ENCODE measurements at regions of chrX and their contacts with region 1.

Region 1: DNA sequence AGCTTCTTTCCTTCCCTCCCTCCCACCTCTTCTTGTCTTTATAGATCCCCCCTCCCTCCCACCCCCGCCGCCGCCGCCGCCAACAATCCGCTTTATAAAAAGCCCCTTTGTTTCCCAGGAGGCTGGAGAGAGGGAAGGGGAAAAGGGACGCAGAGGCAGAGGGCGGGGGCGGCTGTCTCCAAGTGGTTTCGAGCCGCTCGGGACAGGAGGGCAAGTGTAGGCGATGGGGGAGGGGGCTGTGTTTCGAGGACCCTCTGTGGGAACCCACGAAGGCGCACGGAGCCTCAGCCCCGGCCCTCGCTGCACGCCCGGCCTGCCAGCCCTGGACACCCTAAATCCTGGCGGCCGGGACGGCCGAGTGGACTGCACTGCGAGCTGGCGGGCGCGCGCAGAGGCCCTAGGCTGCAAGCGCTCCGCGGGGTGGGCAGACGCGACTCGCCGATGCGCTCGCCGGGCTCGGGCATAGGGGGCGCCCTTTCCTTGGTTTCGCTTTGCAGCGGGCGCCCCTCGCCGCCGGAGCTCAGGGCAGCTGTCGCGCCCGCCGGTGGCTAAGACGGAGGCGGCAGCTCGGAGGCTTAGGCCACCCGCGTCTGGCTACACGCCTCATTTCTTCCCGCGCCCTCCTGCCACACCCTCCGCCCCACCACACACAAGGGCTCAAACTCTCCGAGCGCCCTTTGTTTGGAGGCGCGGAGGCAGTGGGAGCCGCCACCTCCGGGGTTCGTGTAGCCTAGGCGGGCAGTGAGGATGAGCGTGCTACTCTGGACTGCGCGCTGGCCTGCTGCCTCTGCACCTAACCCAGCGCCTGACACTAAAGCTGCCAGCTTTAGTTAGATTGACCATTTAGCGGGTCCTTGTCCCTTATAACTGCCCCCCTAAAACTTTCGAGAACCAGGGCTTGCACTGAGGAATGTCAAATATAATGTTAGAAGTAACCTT is 2.2 kb downstream of the MAMLD1 start:
- DNase-seq: peak; percentile 23
- ATAC-seq: peak; percentile 10
- H3K4me3 Mint-ChIP-seq: peak overlapping the region; percentile 84
- H3K27ac Mint-ChIP-seq: no peak overlapping the region
- H3K4me1 Mint-ChIP-seq: peaks cover 27% of the 10 kb centered on the region
- H3K27me3 Mint-ChIP-seq: peaks cover 4% of the 10 kb centered on the region
- CTCF ChIP-seq: no peak

Region 2: DNA sequence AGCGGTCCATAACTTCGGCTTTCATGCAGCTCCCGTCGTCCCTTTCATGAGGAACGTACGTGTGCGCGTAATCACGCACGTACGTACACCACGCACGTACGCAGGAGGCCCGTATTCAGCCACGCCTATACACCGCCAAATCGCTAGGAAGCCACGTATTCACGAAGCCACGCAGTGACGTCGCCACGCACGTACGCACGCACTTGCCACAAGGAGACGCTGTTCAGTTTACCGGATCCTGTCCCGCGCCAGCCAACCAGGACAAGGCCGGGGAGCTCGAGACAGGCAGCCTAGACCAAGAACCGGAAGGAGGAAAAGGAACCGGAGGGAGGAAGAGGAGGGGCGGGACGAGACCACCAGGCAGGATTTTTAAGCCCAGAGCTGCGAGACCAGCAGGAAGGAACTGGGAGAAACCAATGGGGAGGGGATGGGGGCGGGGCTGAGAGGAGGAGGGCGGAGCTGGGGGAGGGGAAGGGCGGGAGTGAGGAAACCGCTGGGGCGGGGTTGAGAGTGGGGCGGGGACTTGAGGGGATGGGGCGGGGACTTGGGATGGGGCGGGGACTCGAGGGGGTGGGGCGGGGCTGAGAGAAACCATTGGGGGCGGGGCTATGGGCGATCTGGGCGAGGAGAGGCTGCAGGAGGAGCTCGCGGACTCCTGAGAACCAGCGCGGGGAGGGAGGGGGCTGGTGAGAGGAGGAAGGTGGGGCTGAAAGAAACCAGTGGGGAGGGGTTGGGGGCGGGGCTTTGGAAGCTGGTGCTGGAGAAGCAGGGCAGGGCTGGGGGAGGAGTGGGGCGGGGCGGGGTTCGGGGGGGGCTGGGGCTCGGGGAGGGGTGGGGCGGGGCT is 426.7 kb before region 1 on chrX and contains the start of gene EOLA2:
- CTCF ChIA-PET with region 1: no interaction called
- POLR2A ChIA-PET with region 1: interaction called, 5 read pairs
- intact Hi-C with region 1: loop called (anchors 5 kb)
- DNase-seq: peak; percentile 79
- ATAC-seq: peak; percentile 53
- H3K4me3 Mint-ChIP-seq: peak within 1 kb of the TSS; percentile 85
- H3K27ac Mint-ChIP-seq: peak within 1 kb of the TSS; percentile 93
- H3K4me1 Mint-ChIP-seq: peaks cover 10% of the 10 kb centered on the region
- H3K27me3 Mint-ChIP-seq: no peaks in the 10 kb centered on the region
- CTCF ChIP-seq: no peak
- total RNA-seq, gene EOLA2: 37.5 and 38.4 TPM in 2 replicates

Region 3: DNA sequence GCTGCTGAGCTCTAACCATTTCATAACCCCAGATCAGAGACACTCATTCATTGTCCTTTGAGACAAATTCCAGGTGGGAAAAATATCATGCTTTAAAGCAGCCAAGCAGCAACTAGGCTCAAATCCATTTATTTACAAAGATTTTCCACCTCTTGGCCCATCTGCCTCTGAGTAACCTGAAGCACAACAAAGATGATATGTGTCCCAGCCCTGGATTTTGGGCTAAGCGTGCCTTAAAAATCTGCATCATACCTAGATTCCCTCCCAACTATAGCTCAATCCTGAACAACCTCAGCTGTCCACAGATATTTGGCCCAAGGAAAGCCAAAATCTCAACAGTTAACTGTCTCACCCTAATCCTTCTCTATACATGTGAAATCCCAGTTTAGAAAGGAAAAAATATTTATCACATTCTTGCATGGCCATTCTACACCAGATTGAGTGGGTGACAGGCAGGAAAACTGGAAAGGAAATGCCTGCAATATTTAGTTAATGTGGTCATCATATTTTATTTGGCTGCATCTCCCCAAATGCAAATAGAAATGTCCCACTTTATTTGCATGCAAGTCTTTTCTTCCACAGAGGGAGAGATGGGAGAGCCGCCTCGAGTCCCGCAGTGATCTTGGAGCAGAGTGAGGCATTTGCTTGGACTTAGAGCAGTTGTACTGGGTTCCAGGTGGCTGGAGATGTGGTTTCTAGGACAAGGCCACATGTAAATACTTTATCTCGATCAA is 280.7 kb before region 1 on chrX:
- CTCF ChIA-PET with region 1: no interaction called
- POLR2A ChIA-PET with region 1: no interaction called
- intact Hi-C with region 1: loop called (anchors 5 kb)
- DNase-seq: no peak
- ATAC-seq: no peak
- H3K4me3 Mint-ChIP-seq: no peak overlapping the region
- H3K27ac Mint-ChIP-seq: no peak overlapping the region
- H3K4me1 Mint-ChIP-seq: peaks cover 12% of the 10 kb centered on the region
- H3K27me3 Mint-ChIP-seq: no peaks in the 10 kb centered on the region
- CTCF ChIP-seq: no peak

Region 4: GRCh38 chrX:150405576-150405975 is 40.3 kb after region 1 on chrX:
- CTCF ChIA-PET with region 1: no interaction called
- POLR2A ChIA-PET with region 1: no interaction called
- intact Hi-C with region 1: no loop called
- DNase-seq: no peak
- ATAC-seq: no peak
- H3K4me3 Mint-ChIP-seq: no peak overlapping the region
- H3K27ac Mint-ChIP-seq: no peak overlapping the region
- H3K4me1 Mint-ChIP-seq: no peaks in the 10 kb centered on the region
- H3K27me3 Mint-ChIP-seq: no peaks in the 10 kb centered on the region
- CTCF ChIP-seq: no peak

Region 5: GRCh38 chrX:150478496-150479492 is 113.5 kb after region 1 on chrX:
- CTCF ChIA-PET with region 1: no interaction called
- POLR2A ChIA-PET with region 1: no interaction called
- intact Hi-C with region 1: loop called (anchors 2 kb)
- DNase-seq: no peak
- ATAC-seq: peak; percentile 28
- H3K4me3 Mint-ChIP-seq: peak overlapping the region; percentile 71
- H3K27ac Mint-ChIP-seq: peak overlapping the region; percentile 68
- H3K4me1 Mint-ChIP-seq: peaks cover 42% of the 10 kb centered on the region
- H3K27me3 Mint-ChIP-seq: no peaks in the 10 kb centered on the region
- CTCF ChIP-seq: no peak

Region 6: GRCh38 chrX:150568320-150569154 is 203.2 kb after region 1 on chrX and contains the start of gene MTM1:
- CTCF ChIA-PET with region 1: no interaction called
- POLR2A ChIA-PET with region 1: interaction called, 4 read pairs
- intact Hi-C with region 1: loop called (anchors 2 kb)
- DNase-seq: peak; percentile 86
- ATAC-seq: peak; percentile 86
- H3K4me3 Mint-ChIP-seq: peak within 1 kb of the TSS; percentile 86
- H3K27ac Mint-ChIP-seq: peak within 1 kb of the TSS; percentile 89
- H3K4me1 Mint-ChIP-seq: peaks cover 45% of the 10 kb centered on the region
- H3K27me3 Mint-ChIP-seq: no peaks in the 10 kb centered on the region
- CTCF ChIP-seq: no peak
- total RNA-seq, gene MTM1: 22.0 and 24.4 TPM in 2 replicates

Region 7: DNA sequence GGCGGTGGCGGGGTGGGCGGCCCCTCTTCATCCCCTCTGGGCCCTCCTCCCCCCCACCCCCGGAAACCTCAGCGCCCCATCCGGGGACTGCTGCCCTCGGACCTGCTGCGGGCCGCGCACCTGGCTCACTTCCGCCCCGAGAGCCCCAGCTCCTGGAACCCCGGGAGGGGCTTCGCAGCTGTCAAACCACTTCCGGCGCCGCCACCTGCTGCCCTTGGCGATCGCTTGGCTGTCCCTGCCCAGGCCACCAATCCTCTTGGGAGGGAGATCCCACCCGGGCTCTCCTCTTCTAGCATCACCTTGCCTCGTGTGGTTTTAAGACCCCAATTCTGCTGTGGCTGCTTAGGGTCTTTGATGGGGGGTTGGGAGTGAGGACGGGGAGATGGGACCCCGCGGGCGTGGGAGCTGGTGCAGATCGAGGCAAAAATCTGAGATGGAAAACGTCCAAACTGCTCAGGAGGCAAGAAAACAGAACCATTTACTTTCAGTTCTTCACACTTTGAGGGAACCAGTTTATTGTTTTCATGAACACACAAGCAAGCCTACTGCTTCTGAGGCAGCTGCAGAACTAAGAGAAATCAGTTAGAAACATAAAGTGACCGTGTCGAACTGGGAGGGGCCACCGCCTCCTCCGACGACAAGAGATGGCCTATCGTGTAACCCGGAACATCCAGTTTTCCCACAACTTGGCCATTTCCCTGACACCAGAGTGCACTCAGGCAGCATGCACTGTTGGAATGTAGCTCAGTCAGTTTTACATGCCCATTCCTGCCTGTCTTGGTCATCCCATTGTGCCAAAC is 328.7 kb after region 1 on chrX:
- CTCF ChIA-PET with region 1: no interaction called
- POLR2A ChIA-PET with region 1: interaction called, 12 read pairs
- intact Hi-C with region 1: loop called (anchors 5 kb)
- DNase-seq: peak; percentile 65
- ATAC-seq: peak; percentile 56
- H3K4me3 Mint-ChIP-seq: peak overlapping the region; percentile 88
- H3K27ac Mint-ChIP-seq: peak overlapping the region; percentile 98
- H3K4me1 Mint-ChIP-seq: peaks cover 61% of the 10 kb centered on the region
- H3K27me3 Mint-ChIP-seq: no peaks in the 10 kb centered on the region
- CTCF ChIP-seq: no peak

Region 8: DNA sequence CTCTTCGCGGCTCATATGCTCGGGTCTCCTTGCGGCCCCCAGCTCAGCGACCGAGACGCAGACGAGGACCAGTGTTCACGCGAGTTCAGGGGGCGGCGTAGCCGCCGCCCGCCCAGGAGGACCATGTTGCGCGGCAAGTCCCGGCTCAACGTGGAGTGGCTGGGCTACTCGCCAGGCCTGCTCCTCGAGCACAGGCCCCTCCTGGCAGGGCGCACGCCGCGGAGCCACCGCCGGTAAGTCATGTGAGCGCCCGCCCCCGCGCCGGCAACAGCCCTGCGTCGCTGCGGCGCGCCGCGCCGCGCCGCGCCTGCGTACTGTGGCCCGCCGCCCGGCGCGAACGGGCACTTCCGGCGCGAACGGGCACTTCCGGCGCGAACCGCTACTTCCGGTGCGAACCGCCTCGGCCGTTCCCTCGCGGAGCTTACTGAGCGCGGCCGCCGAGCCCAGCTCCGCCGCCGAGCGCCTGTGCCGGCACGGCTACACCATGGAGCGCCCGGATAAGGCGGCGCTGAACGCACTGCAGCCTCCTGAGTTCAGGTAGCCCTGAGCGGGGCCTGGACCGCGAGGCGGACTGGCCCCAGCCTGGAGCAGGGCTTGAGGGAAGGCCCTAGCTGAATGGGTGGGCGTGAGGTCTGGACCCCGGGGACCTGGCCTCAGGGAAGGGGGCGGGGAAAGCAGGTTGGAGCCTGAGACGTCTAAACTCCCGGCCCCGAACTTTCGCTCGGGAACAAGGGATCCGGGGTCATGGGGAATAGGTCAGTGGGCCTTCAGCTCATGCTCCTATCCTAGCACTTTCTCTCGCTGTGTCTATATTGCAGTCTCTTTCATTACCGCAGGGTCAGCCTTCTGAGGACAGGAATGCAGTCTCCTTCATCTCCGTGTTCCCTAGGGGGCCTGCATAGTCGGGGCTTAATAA is 1031.8 kb after region 1 on chrX and contains the start of gene VMA21:
- CTCF ChIA-PET with region 1: no interaction called
- POLR2A ChIA-PET with region 1: no interaction called
- intact Hi-C with region 1: loop called (anchors 5 kb)
- DNase-seq: peak; percentile 79
- ATAC-seq: peak; percentile 87
- H3K4me3 Mint-ChIP-seq: peak within 1 kb of the TSS; percentile 87
- H3K27ac Mint-ChIP-seq: peak within 1 kb of the TSS; percentile 95
- H3K4me1 Mint-ChIP-seq: peaks cover 43% of the 10 kb centered on the region
- H3K27me3 Mint-ChIP-seq: no peaks in the 10 kb centered on the region
- CTCF ChIP-seq: no peak
- total RNA-seq, gene VMA21: 26.1 and 26.5 TPM in 2 replicates

Region 9: GRCh38 chrX:152131525-152131924 is 1766.2 kb after region 1 on chrX:
- CTCF ChIA-PET with region 1: no interaction called
- POLR2A ChIA-PET with region 1: no interaction called
- intact Hi-C with region 1: no loop called
- DNase-seq: no peak
- ATAC-seq: no peak
- H3K4me3 Mint-ChIP-seq: no peak overlapping the region
- H3K27ac Mint-ChIP-seq: no peak overlapping the region
- H3K4me1 Mint-ChIP-seq: no peaks in the 10 kb centered on the region
- H3K27me3 Mint-ChIP-seq: no peaks in the 10 kb centered on the region
- CTCF ChIP-seq: no peak

Measured in activated B cell treated with CpG ODN at 0.5 μM for 24 hours (primary cell).